Activated CD4-positive, alpha-beta T cell treated with anti-CD3 and anti-CD28 coated beads, Interleukin-2, amount 10 ng/mL, durations not matched to agents 7 days and 5 days (primary cell): ENCODE measurements at regions of chr1 and their contacts with region 1.

Region 1: DNA sequence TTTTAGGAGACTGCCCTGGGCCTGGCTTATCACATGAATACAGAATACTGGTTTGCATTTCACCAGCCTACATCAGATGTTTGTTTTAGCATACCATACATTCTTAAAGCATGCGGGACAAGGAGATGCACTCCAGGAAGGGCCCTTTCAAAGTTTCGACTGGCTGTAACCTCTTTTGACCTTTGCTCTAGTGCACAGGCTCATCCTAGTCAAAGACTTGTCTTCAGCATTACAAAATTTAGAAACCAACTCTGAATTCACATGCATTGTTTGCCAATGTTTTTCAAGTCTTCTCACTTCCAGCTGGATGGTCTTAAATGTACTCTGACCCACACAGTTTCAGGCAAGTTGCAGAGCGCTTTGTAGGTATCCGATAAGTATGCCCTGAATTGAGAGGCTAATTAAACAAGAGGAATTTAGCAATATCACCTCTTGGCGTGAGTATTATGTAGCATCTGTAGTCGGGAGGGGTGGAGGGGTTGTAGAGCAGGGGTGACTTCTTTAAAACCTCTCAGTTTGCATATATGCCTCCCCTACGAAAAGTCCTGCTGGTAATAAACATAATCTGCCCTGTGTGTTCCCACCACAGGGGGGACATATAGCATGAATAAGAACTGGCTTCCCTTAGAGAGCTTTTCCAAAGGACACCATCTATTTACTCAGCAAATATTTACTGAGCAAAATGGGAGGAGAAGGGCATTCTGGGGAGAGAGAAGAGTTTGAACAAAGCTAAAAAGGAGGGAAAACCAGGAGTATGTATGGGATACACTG is 24.4 kb upstream of the AHCYL1 start:
- DNase-seq: no peak
- H3K4me3 Mint-ChIP-seq: no peak overlapping the region
- H3K27ac Mint-ChIP-seq: no peak overlapping the region
- H3K4me1 Mint-ChIP-seq: no peaks in the 10 kb centered on the region
- H3K27me3 Mint-ChIP-seq: peaks cover 23% of the 10 kb centered on the region

Region 2: GRCh38 chr1:109947582-109948286 is 12.4 kb before region 1 on chr1:
- CTCF ChIA-PET with region 1: interaction called, 11 read pairs
- POLR2A ChIA-PET with region 1: no interaction called
- DNase-seq: no peak
- H3K4me3 Mint-ChIP-seq: no peak overlapping the region
- H3K27ac Mint-ChIP-seq: no peak overlapping the region
- H3K4me1 Mint-ChIP-seq: peaks cover 4% of the 10 kb centered on the region
- H3K27me3 Mint-ChIP-seq: no peaks in the 10 kb centered on the region